Mammary epithelial cell (primary cell): ENCODE measurements at regions of chr11 and their contacts with region 1.

Region 1: GRCh38 chr11:43504316-43504950 is 145.7 kb downstream of the TTC17 start:
- DNase-seq: peak; percentile 18
- H3K4me3 ChIP-seq: no peak overlapping the region
- H3K27ac ChIP-seq: no peak overlapping the region
- H3K4me1 ChIP-seq: peaks cover 16% of the 10 kb centered on the region
- H3K27me3 ChIP-seq: no peaks in the 10 kb centered on the region
- CTCF ChIP-seq: peak; percentile 47 to 79

Region 2: DNA sequence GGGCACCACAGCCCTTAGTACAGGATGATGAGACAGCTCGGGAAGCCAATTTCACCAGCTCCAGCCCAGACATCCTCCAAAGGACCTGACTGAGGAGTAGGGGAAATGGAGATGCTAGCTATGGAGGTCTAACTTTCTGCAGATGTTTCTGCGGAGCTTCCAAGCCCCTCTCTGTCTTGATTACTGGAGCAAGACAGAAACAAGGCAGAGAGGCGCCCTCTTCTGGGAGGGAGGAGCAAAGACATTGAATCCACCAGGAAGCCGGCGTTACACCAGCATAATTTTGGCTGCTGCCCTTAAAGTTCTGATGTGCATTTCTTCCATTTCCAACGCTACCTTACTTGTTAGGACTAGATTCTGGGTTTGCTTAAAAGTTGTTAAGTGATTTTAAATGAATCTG is 68.8 kb after region 1 on chr11:
- CTCF ChIA-PET with region 1: interaction called, 5 read pairs
- dilution Hi-C with region 1: no loop called
- in situ Hi-C with region 1: loop called (anchors 5 to 10 kb)
- intact Hi-C with region 1: no loop called
- DNase-seq: no peak
- H3K4me3 ChIP-seq: no peak overlapping the region
- H3K27ac ChIP-seq: no peak overlapping the region
- H3K4me1 ChIP-seq: peaks cover 9% of the 10 kb centered on the region
- H3K27me3 ChIP-seq: peaks cover 43% of the 10 kb centered on the region
- CTCF ChIP-seq: peak; percentile 70 to 78

Region 3: GRCh38 chr11:43708776-43709175 is 204.3 kb after region 1 on chr11:
- CTCF ChIA-PET with region 1: interaction called, 4 read pairs
- dilution Hi-C with region 1: no loop called
- in situ Hi-C with region 1: no loop called
- intact Hi-C with region 1: loop called (anchors 2 kb)
- DNase-seq: no peak
- H3K4me3 ChIP-seq: no peak overlapping the region
- H3K27ac ChIP-seq: no peak overlapping the region
- H3K4me1 ChIP-seq: no peaks in the 10 kb centered on the region
- H3K27me3 ChIP-seq: no peaks in the 10 kb centered on the region
- CTCF ChIP-seq: peak; percentile 25 to 40

Region 4: DNA sequence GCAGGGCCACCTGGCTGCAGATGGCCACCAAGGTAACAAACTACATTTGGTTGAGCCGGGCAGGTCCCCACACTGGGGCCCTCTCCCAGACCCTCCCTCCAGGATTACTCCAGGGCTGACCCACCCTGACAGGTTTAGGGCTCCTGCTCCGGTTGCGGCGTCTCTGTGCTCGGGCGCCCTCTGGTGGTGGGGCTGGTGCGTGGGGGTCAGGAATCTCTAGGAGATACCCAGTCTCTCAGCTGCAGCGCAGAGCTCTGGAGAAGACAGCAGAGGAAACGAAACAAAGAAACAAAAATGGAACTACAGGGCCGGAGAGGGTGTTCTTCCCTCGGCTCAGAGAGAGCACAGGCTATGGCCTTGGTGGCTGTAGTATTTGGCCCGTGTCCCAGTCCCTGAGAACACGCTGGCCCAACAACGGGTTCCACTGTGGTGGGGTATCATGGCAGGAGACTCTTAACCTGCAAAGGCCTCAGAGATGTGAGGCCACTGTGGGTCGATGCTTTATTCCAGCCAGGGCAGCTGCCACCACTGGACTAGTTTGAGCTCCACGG is 440.4 kb after region 1 on chr11:
- CTCF ChIA-PET with region 1: no interaction called
- dilution Hi-C with region 1: no loop called
- in situ Hi-C with region 1: no loop called
- intact Hi-C with region 1: loop called (anchors 1 kb)
- DNase-seq: peak; percentile 54
- H3K4me3 ChIP-seq: peak overlapping the region in 1 of 3 experiments; percentile 46
- H3K27ac ChIP-seq: no peak overlapping the region
- H3K4me1 ChIP-seq: peaks cover 24% of the 10 kb centered on the region
- H3K27me3 ChIP-seq: peaks cover 37% of the 10 kb centered on the region
- CTCF ChIP-seq: peak; percentile 57 to 96